ENCODE measurements at regions of chrX and their contacts with region 1.

Region 1: DNA sequence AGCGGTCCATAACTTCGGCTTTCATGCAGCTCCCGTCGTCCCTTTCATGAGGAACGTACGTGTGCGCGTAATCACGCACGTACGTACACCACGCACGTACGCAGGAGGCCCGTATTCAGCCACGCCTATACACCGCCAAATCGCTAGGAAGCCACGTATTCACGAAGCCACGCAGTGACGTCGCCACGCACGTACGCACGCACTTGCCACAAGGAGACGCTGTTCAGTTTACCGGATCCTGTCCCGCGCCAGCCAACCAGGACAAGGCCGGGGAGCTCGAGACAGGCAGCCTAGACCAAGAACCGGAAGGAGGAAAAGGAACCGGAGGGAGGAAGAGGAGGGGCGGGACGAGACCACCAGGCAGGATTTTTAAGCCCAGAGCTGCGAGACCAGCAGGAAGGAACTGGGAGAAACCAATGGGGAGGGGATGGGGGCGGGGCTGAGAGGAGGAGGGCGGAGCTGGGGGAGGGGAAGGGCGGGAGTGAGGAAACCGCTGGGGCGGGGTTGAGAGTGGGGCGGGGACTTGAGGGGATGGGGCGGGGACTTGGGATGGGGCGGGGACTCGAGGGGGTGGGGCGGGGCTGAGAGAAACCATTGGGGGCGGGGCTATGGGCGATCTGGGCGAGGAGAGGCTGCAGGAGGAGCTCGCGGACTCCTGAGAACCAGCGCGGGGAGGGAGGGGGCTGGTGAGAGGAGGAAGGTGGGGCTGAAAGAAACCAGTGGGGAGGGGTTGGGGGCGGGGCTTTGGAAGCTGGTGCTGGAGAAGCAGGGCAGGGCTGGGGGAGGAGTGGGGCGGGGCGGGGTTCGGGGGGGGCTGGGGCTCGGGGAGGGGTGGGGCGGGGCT is at the start of gene EOLA2:
- DNase-seq: peak; percentile 97
- ATAC-seq: peak; percentile 51
- H3K4me3 ChIP-seq: peak within 1 kb of the TSS; percentile 30 to 86 (median 72)
- H3K4me3 Mint-ChIP-seq: peak within 1 kb of the TSS; percentile 93
- H3K27ac ChIP-seq: peak within 1 kb of the TSS; percentile 94 to 98
- H3K27ac Mint-ChIP-seq: peak within 1 kb of the TSS; percentile 99
- H3K4me1 ChIP-seq: peaks cover 5 to 12% of the 10 kb centered on the region in 2 donors
- H3K4me1 Mint-ChIP-seq: peaks cover 4% of the 10 kb centered on the region
- H3K27me3 ChIP-seq: no peaks in the 10 kb centered on the region
- H3K27me3 Mint-ChIP-seq: no peaks in the 10 kb centered on the region
- CTCF ChIP-seq: peak; percentile 22
- total RNA-seq, gene EOLA2: 37.7 and 42.0 TPM in 2 replicates

Region 2: GRCh38 chrX:149881081-149881711 is 57.5 kb before region 1 on chrX and contains the start of gene MAGEA8:
- CTCF ChIA-PET with region 1: no interaction called
- POLR2A ChIA-PET with region 1: no interaction called
- intact Hi-C with region 1: no loop called
- DNase-seq: no peak
- ATAC-seq: no peak
- H3K4me3 ChIP-seq: no peak within 1 kb of the TSS
- H3K4me3 Mint-ChIP-seq: no peak within 1 kb of the TSS
- H3K27ac ChIP-seq: no peak within 1 kb of the TSS
- H3K27ac Mint-ChIP-seq: no peak within 1 kb of the TSS
- H3K4me1 ChIP-seq: no peaks in the 10 kb centered on the region
- H3K4me1 Mint-ChIP-seq: no peaks in the 10 kb centered on the region
- H3K27me3 ChIP-seq: no peaks in the 10 kb centered on the region
- H3K27me3 Mint-ChIP-seq: no peaks in the 10 kb centered on the region
- CTCF ChIP-seq: no peak
- total RNA-seq, gene MAGEA8: not detected in 2 replicates

Region 3: DNA sequence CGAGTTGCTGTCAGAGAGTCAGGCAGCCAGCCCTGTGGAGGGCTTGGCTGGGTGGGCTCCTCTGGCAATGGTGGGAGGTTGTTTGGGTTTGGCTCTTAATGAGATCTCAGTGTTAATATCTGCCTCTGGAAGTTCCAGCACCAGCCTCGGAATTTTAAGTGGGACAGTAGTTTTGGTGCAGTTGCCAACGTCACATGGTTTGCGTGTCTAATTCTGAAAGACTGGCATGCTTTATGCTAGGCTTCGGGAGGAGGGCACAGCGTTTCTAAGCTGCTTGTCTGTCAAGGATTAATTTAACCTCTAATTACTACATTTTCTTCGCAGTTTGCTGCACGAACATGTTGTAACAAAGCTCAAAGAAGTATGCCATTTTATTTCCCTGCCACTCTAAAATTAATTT is 433.6 kb after region 1 on chrX:
- CTCF ChIA-PET with region 1: no interaction called
- POLR2A ChIA-PET with region 1: no interaction called
- intact Hi-C with region 1: no loop called
- DNase-seq: no peak
- ATAC-seq: no peak
- H3K4me3 ChIP-seq: no peak overlapping the region
- H3K4me3 Mint-ChIP-seq: no peak overlapping the region
- H3K27ac ChIP-seq: no peak overlapping the region
- H3K27ac Mint-ChIP-seq: no peak overlapping the region
- H3K4me1 ChIP-seq: no peaks in the 10 kb centered on the region
- H3K4me1 Mint-ChIP-seq: no peaks in the 10 kb centered on the region
- H3K27me3 ChIP-seq: no peaks in the 10 kb centered on the region
- H3K27me3 Mint-ChIP-seq: peaks cover 7% of the 10 kb centered on the region
- CTCF ChIP-seq: no peak

Region 4: GRCh38 chrX:150730719-150731118 is 792.1 kb after region 1 on chrX:
- CTCF ChIA-PET with region 1: no interaction called
- POLR2A ChIA-PET with region 1: interaction called, 12 read pairs
- intact Hi-C with region 1: no loop called
- DNase-seq: no peak
- ATAC-seq: no peak
- H3K4me3 ChIP-seq: no peak overlapping the region
- H3K4me3 Mint-ChIP-seq: no peak overlapping the region
- H3K27ac ChIP-seq: no peak overlapping the region
- H3K27ac Mint-ChIP-seq: no peak overlapping the region
- H3K4me1 ChIP-seq: peaks cover 1 to 2% of the 10 kb centered on the region in 2 donors
- H3K4me1 Mint-ChIP-seq: peaks cover 10% of the 10 kb centered on the region
- H3K27me3 ChIP-seq: no peaks in the 10 kb centered on the region
- H3K27me3 Mint-ChIP-seq: no peaks in the 10 kb centered on the region
- CTCF ChIP-seq: no peak